Activated naive CD4-positive, alpha-beta T cell treated with anti-CD3 and anti-CD28 coated beads for 36 hours (primary cell): ENCODE measurements at regions of chr11 and their contacts with region 1.

Region 1: DNA sequence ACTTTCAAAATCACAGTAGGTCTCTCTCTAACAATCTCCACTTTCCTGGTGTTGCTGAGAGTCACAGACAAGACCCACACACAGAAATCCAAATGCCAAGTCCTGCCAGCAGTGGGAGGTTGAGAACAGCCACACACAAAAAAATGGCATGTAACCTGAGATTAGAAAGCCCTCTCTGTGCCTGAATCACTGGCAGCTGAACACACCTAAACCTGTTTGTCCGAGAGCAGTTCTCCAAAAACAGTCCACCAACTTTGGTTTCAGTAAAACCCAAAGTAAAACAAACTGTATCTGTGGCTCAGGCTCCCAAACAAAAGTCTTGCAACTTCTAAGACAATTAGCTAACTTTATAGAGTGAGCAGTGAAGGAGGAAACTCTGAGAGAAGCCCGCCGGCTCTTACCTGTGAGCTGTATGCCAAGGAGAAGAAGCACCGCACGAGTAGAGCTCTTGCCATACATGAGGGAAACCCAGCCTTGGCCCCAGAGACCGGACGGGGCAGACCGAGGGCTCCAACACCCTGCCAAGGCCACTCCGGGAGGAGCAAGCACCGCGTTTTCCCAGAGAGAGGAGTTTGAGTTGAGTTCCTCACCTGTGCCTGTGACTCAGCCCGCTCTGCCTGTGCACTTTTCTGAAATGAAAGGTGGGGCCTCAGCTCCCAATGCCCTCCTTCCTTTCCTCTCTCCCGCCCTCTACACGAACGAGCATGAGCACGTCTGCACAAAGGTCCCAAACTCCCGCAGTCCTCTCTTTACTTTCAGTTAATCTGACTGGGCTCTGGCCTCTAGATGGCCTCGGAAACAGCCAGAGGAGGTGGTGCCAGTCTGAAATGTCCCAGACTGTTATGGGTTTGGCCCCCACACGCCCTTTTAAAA is at the start of gene MPZL2:
- DNase-seq: peak; percentile 73
- H3K4me3 Mint-ChIP-seq: peak within 1 kb of the TSS; percentile 86
- H3K27ac Mint-ChIP-seq: peak within 1 kb of the TSS; percentile 68
- H3K4me1 Mint-ChIP-seq: peaks cover 39% of the 10 kb centered on the region
- H3K27me3 Mint-ChIP-seq: no peaks in the 10 kb centered on the region
- total RNA-seq, gene MPZL2: 25.3 to 28.4 TPM

Region 2: GRCh38 chr11:118156531-118157185 is 107.3 kb before region 1 on chr11:
- CTCF ChIA-PET with region 1: no interaction called
- intact Hi-C with region 1: no loop called
- DNase-seq: peak; percentile 39
- H3K4me3 Mint-ChIP-seq: no peak overlapping the region
- H3K27ac Mint-ChIP-seq: no peak overlapping the region
- H3K4me1 Mint-ChIP-seq: peaks cover 11% of the 10 kb centered on the region
- H3K27me3 Mint-ChIP-seq: peaks cover 61% of the 10 kb centered on the region

Region 3: DNA sequence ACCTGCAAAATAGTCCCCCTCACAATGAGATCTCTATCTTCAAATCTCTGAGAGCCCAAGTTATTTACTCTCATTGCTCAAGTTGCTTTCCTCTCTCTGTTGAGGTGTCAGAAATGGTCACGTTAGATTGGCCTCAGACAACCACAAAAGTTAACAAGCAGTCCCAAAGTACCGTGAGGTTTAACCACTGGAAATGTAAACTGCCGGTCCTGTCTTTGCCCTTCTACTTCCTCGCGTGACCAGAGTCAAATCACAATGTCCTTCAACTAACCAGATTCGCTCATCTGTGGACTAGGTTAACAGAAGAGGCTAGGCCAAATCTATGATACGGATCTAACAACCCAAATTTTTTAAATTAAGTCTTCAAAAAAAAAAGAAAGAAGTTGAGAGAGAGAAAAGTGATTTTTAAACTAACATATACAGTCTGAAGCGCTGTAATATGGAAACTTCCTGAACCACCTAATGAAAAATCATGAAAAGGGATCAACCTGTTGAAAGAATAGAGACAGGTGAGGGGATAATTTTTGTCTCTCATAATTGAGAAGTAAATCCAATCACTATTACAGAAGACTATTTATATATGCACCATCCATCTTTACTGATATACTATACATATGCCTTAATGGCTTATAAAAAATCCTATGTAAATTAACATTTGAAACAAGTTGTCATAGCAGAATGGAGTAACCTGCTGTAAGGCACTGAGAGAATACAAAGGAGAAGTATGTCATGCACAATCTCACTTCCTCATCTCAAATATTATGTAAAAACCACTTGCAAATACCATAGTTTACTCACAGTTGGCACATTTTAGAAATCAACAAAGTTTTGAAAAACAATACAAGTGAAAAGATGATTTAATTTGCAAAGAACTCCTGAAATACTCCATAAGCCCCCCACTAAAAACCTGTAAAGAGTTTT is 35.8 kb before region 1 on chr11:
- CTCF ChIA-PET with region 1: no interaction called
- intact Hi-C with region 1: loop called (anchors 1 kb)
- DNase-seq: peak; percentile 30
- H3K4me3 Mint-ChIP-seq: peak overlapping the region; percentile 3
- H3K27ac Mint-ChIP-seq: peak overlapping the region; percentile 89
- H3K4me1 Mint-ChIP-seq: peaks cover 20% of the 10 kb centered on the region
- H3K27me3 Mint-ChIP-seq: no peaks in the 10 kb centered on the region

Region 4: DNA sequence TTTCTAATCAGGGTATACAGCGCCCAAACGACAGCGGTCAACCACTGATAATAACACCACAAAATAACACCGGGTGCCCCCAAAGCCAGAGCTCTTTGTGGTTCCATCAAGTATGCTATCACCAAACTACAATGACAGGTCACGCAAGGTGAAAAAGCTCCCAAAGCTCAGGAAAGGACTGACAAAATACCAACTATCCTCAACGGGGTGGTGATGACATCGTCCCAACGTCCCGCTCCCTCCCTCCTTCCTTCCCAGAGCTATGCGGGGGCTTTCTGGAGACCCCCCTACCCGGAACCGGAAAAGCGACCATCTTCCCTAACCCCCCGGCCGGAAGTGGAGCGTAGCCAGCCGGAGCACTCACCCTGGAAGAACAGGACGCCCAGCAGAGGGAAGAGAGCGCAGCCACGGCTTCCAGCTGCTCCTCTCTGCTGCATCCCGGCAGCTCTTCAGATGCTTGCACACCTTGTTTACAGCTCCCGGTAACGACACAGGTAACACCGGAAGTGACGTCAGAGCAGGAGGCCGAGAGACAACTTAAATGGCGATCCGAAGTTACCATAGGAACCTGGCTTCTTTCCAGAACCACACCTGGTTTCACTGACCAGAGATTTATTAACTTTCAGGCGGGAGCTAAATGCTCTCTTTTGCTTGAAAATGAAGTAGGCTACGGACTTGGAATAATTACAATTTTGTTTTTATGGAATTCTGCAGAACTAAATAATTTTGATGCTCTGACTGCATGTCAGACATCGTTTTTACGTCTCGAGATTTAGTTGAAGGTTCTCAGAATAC is 11.9 kb before region 1 on chr11 and contains the start of gene MPZL3:
- CTCF ChIA-PET with region 1: interaction called, 6 read pairs
- intact Hi-C with region 1: loop called (anchors 1 kb)
- DNase-seq: peak; percentile 93
- H3K4me3 Mint-ChIP-seq: peak within 1 kb of the TSS; percentile 98
- H3K27ac Mint-ChIP-seq: peak within 1 kb of the TSS; percentile 99
- H3K4me1 Mint-ChIP-seq: peaks cover 39% of the 10 kb centered on the region
- H3K27me3 Mint-ChIP-seq: no peaks in the 10 kb centered on the region
- total RNA-seq, gene MPZL3: 29.3 to 30.5 TPM

Region 5: DNA sequence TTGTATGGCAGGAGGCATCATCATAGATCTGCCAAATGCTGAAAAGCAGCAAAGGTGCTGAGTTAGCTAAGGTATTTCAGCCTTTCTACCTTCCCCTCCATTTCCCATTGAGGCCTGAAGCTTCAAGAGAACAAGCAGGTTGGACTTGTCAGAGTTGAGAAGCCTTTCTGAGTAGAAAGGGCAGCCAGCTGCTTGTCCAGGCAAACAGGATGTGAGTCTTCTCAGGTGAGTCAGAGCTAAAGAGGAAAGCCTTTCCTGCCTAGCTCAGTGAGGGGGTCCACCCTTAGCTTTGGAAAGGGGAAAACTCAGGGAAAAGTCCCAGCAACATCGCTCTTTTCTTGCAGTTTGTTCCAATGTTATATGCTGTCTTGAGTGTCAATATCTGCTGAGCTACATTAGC is 13.4 kb after region 1 on chr11:
- CTCF ChIA-PET with region 1: interaction called, 6 read pairs
- intact Hi-C with region 1: loop called (anchors 1 kb)
- DNase-seq: peak; percentile 55
- H3K4me3 Mint-ChIP-seq: no peak overlapping the region
- H3K27ac Mint-ChIP-seq: no peak overlapping the region
- H3K4me1 Mint-ChIP-seq: peaks cover 52% of the 10 kb centered on the region
- H3K27me3 Mint-ChIP-seq: no peaks in the 10 kb centered on the region

Region 6: GRCh38 chr11:118290923-118291322 is 27.0 kb after region 1 on chr11:
- CTCF ChIA-PET with region 1: interaction called, 5 read pairs
- intact Hi-C with region 1: loop called (anchors 1 kb)
- DNase-seq: peak; percentile 74
- H3K4me3 Mint-ChIP-seq: no peak overlapping the region
- H3K27ac Mint-ChIP-seq: no peak overlapping the region
- H3K4me1 Mint-ChIP-seq: peaks cover 28% of the 10 kb centered on the region
- H3K27me3 Mint-ChIP-seq: no peaks in the 10 kb centered on the region

Region 7: DNA sequence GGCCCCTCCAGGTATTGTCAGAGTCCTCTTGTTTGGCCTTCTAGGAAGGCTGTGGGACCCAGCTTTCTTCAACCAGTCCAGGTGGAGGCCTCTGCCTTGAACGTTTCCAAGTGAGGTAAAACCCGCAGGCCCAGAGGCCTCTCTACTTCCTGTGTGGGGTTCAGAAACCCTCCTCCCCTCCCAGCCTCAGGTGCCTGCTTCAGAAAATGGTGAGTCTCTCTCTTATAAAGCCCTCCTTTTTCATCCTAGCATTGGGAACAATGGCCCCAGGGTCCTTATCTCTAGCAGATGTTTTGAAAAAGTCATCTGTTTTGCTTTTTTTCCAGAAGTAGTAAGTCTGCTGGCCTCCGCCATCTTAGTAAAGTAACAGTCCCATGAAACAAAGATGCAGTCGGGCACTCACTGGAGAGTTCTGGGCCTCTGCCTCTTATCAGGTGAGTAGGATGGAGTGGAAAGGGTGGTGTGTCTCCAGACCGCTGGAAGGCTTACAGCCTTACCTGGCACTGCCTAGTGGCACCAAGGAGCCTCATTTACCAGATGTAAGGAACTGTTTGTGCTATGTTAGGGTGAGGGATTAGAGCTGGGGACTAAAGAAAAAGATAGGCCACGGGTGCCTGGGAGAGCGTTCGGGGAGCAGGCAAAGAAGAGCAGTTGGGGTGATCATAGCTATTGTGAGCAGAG is 40.8 kb after region 1 on chr11 and contains the start of gene CD3E:
- CTCF ChIA-PET with region 1: no interaction called
- intact Hi-C with region 1: no loop called
- DNase-seq: peak; percentile 88
- H3K4me3 Mint-ChIP-seq: peak within 1 kb of the TSS; percentile 98
- H3K27ac Mint-ChIP-seq: peak within 1 kb of the TSS; percentile 100
- H3K4me1 Mint-ChIP-seq: peaks cover 68% of the 10 kb centered on the region
- H3K27me3 Mint-ChIP-seq: no peaks in the 10 kb centered on the region
- total RNA-seq, gene CD3E: 377 to 415 TPM